ENCODE measurements at regions of chr3 and their contacts with region 1.

Region 1: DNA sequence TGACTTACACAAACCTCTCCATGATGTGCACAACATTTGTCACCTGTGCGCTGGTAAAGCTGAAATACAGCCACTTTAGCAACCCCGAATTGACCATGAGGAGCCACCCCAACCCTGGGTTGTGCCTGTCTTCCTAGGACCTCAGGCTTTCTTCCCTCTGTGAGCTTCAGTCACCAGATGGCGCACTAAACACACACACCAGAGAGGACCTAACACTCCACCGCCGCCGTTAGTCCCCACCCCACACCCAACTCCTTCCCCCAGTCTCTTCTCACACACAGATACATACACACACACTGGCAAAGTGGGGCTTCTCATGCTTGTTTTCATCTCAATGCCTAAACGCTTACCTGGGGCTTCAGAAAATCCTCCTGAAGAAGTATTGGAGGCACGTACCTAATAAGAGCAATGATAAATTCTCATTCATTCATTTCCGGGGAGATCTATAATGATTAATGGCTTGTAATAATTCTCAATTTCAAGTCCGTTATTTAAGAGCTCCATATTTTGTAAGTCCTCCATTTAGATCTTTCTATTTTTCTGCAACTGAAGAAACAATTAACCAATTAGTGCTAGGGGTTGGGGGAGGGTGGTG is 2.1 kb upstream of the CCDC80 start:
- DNase-seq: peak; percentile 92
- ATAC-seq: peak; percentile 100
- H3K4me3 Mint-ChIP-seq: peak overlapping the region; percentile 59
- H3K27ac Mint-ChIP-seq: peak overlapping the region; percentile 64
- H3K4me1 Mint-ChIP-seq: peaks cover 21% of the 10 kb centered on the region
- H3K27me3 Mint-ChIP-seq: peaks cover 10% of the 10 kb centered on the region

Region 2: GRCh38 chr3:112627419-112627818 is 15.6 kb before region 1 on chr3:
- CTCF ChIA-PET with region 1: interaction called, 17 read pairs
- POLR2A ChIA-PET with region 1: no interaction called
- DNase-seq: no peak
- ATAC-seq: no peak
- H3K4me3 Mint-ChIP-seq: no peak overlapping the region
- H3K27ac Mint-ChIP-seq: no peak overlapping the region
- H3K4me1 Mint-ChIP-seq: no peaks in the 10 kb centered on the region
- H3K27me3 Mint-ChIP-seq: peaks cover 15% of the 10 kb centered on the region

Region 3: GRCh38 chr3:112676659-112677234 is 33.7 kb after region 1 on chr3:
- CTCF ChIA-PET with region 1: interaction called, 21 read pairs
- POLR2A ChIA-PET with region 1: no interaction called
- DNase-seq: peak; percentile 93
- ATAC-seq: peak; percentile 94
- H3K4me3 Mint-ChIP-seq: peak overlapping the region; percentile 15
- H3K27ac Mint-ChIP-seq: peak overlapping the region; percentile 88
- H3K4me1 Mint-ChIP-seq: peaks cover 68% of the 10 kb centered on the region
- H3K27me3 Mint-ChIP-seq: no peaks in the 10 kb centered on the region

Region 4: GRCh38 chr3:112814266-112814665 is 171.3 kb after region 1 on chr3:
- CTCF ChIA-PET with region 1: interaction called, 43 read pairs
- POLR2A ChIA-PET with region 1: no interaction called
- DNase-seq: no peak
- ATAC-seq: no peak
- H3K4me3 Mint-ChIP-seq: no peak overlapping the region
- H3K27ac Mint-ChIP-seq: no peak overlapping the region
- H3K4me1 Mint-ChIP-seq: peaks cover 24% of the 10 kb centered on the region
- H3K27me3 Mint-ChIP-seq: peaks cover 3% of the 10 kb centered on the region

Region 5: DNA sequence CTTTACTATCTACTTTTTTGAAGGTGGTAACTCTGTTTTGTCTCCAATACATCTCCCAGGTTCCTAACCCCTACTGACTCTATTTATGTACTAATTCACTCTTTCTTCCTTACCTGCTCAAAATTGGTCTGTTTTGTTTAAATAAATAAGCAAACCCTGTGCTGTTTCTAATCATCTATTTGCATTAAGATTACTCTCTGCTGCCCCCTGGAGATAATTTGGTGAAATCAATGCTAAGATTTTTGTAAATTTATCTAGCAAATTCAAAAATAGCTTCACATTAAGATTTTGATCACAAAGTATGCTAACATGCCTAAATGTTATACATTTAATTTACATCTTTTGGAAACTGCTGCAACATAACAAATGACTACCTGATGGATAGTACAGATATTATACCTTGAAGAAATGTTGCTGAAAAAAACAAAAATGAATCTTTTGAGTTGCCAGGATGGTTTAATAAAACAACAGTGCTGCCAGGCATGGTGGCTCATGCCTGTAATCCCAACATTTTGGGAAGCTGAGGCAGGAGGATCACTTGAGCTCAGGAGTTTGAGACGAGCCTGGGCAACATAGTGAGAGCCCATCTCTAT is 336.3 kb after region 1 on chr3:
- CTCF ChIA-PET with region 1: interaction called, 110 read pairs
- POLR2A ChIA-PET with region 1: interaction called, 3 read pairs
- DNase-seq: peak; percentile 47
- ATAC-seq: no peak
- H3K4me3 Mint-ChIP-seq: no peak overlapping the region
- H3K27ac Mint-ChIP-seq: no peak overlapping the region
- H3K4me1 Mint-ChIP-seq: peaks cover 37% of the 10 kb centered on the region
- H3K27me3 Mint-ChIP-seq: no peaks in the 10 kb centered on the region

Region 6: DNA sequence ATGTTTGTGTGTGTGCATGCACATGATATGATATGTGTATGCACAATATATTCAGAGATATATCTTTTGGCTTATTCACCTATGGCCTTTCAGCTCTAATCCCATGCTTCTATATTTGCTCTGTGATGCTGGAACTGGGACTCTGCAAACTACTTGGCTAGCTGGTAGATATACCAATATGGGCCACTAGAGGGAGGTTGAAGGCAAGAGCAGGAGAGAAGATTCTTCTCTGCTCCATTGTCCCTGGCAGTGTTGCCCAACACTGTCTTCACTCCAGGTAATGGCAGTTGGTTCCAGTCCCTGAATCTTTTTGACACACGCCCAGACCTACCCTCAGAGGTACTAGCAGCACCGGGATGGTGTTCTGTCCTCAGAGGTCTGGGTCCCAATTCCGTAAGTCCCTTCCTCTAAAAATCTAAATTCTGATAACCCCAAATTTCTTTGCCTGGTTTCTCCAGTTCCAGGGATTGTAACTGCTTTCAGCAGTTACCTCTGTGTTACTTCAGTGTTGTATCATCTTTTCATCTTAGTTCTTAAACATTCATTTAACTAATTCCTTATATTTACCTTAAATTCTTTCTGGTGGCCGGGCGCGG is 392.5 kb after region 1 on chr3:
- CTCF ChIA-PET with region 1: interaction called, 21 read pairs
- POLR2A ChIA-PET with region 1: no interaction called
- DNase-seq: peak; percentile 56
- ATAC-seq: peak; percentile 72
- H3K4me3 Mint-ChIP-seq: no peak overlapping the region
- H3K27ac Mint-ChIP-seq: no peak overlapping the region
- H3K4me1 Mint-ChIP-seq: no peaks in the 10 kb centered on the region
- H3K27me3 Mint-ChIP-seq: no peaks in the 10 kb centered on the region